Activated T-helper 2 cell treated with anti-CD3 and anti-CD28 coated beads, Interferon-gamma antibody, Interleukin-2, Interleukin-4, amounts not matched to agents 10 μg/mL and 5 μg/mL and 100 μg/mL, durations not matched to agents 14 hours and 24 hours and 36 hours (primary cell): ENCODE measurements at regions of chr11 and their contacts with region 1.

Region 1: DNA sequence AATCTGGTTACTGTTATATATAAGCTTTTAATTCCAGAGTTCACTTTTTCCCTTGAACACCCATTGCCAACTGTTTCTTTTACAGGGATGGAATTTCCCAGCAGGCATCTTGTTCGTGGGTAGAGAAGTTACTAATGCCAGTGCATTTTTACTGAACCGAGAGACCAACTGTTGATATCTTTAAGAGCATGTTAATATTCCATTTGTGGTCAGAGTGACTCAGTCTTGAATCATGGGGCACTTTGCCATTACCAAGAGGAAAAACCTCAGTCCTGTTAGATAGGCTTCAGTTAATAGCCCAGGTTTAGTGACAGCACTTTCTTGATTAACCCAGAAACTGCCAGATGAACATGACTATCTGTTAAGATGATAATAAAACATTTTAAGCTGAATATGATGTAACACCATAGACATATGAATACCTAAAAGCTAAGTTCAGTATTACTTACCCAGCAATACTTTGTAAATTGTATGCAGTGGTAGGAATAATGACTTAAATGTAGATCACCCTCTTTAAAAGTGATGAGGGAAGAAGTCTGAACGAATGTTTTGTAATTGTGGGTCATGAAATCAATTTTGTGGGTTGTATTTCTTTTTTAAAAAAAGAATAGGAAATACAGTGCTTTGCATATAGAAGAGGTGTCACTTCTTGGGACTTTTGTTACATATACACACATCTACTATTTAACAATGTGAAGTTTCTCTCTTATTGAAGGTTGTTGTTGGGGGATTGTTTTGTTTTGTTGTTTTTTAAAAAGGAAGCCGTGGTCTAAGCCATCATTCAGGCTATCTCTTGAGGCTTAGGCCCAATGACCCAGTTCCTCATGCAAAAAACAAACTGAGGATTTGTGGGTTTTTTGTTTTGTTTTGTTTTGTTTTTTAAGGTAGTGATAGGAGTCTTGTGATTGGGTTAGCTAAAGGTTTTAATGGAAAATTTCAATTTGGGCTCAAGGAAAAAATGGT is 79.2 kb upstream of the GRIK4 start:
- DNase-seq: no peak
- H3K4me3 Mint-ChIP-seq: no peak overlapping the region
- H3K27ac Mint-ChIP-seq: peak overlapping the region; percentile 67
- H3K4me1 Mint-ChIP-seq: peaks cover 17% of the 10 kb centered on the region
- H3K27me3 Mint-ChIP-seq: no peaks in the 10 kb centered on the region

Region 2: DNA sequence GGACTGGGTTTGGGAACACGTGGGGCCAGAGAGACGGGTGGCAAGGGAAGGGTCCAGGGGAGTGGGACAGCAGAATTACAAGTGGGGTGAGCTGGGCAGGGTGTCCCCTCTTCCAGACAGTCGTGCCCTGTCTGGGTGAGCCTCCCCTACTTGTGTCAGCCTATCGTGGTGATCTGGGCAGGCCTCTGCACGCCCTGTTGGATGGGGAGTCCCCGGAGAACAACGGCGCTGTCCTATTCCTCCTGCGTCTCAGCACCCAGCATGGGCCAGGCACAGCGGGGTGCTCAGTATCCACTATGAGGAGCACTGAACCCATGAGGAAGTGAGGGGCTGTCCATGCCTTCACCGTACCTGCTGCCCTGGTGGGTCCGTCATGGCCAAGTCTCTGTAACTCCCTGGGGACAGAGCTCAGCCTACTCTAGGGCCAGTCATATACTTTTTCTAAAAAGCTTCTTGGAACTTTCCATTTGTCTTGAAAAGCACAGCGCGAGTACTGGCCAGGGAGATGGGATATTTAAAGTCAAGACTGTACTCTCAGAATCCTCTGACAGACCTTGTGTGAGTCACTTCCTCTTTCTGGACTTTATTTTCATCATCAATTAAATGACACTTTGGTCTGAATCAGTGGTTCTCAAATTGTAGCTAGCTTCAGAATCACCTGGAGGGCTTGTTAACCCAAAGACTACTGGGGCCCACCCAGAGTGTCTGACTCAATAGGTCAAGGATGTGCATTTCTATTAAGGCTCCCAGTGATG is 621.7 kb before region 1 on chr11:
- intact Hi-C with region 1: no loop called
- DNase-seq: no peak
- H3K4me3 Mint-ChIP-seq: no peak overlapping the region
- H3K27ac Mint-ChIP-seq: no peak overlapping the region
- H3K4me1 Mint-ChIP-seq: no peaks in the 10 kb centered on the region
- H3K27me3 Mint-ChIP-seq: peaks cover 2% of the 10 kb centered on the region

Region 3: DNA sequence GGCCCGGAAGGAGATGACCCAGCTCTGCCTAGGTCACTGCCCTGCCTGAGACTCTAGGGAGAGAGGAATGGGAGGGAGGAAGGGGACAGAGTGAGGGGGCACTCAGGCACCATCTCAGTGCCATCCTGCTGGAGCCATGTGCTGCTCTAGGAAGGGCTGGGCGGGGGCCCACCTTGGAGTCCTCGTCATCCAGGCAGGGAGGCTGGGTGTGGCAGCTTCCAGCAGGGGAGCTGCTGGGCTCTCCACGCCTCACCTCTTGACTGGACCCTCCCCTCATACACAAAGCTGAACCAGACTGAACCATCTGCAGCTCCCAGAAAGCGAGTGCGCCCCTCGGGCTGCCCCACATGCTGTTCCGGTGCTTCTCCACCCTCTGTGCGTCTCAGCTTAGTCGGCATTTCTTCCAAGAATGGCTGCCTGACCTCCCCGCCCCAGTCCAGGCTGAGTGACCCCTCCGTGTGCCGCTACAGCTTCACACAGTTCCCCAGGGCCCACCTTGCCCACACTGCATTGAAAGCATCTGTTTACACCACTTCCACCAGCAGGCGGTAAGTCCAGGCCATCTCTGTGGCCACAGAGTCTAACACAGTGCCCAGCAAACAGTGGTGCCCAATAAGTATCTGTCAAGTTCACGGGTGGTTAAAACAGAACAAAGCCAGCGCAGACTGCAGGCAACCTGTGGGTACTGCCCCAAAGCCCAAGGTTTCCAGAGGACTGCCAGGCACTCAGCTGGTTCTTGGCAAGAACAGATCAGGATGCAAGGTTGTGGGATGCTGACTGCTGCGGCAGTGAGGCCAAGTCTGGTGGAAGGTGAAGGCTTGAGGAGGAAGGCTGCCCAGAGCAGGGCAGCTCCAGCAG is 285.0 kb before region 1 on chr11:
- intact Hi-C with region 1: no loop called
- DNase-seq: no peak
- H3K4me3 Mint-ChIP-seq: no peak overlapping the region
- H3K27ac Mint-ChIP-seq: no peak overlapping the region
- H3K4me1 Mint-ChIP-seq: no peaks in the 10 kb centered on the region
- H3K27me3 Mint-ChIP-seq: peaks cover 24% of the 10 kb centered on the region

Region 4: DNA sequence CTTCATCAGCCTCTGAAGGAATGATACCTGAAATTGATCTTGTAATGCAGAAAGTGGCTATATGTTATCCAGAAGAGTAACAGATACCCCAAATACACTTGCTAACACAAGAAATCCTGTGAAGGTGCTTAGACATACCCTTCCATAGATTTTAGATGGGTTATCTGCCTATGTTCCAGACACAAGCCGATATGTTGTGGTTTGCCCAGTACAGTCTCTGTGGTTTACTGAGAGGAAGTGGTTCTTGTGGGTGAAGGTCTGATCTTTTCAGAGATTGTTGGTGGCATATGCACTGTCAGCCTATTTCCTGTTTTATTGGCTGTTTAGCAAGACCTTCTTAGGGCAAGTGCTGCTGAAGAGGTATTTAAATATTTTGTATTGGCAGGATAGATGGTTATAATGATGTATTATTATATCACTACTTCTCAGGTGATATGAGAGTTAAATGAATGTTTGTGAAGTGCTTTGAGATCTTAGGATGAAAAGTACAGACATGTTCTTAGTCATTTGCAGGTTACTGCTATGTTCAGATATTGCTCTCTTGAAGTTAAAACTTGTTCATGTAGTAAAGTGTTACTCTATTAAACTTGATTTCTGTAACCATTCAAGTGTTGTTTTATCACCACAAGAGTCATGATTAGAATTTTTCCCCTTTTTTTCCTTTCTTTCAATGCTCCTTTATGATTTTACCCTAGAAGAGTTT is 87.9 kb before region 1 on chr11:
- intact Hi-C with region 1: loop called (anchors 2 kb)
- DNase-seq: peak; percentile 62
- H3K4me3 Mint-ChIP-seq: peak overlapping the region; percentile 23
- H3K27ac Mint-ChIP-seq: peak overlapping the region; percentile 9
- H3K4me1 Mint-ChIP-seq: peaks cover 37% of the 10 kb centered on the region
- H3K27me3 Mint-ChIP-seq: peaks cover 59% of the 10 kb centered on the region